Activated naive CD4-positive, alpha-beta T cell treated with anti-CD3 and anti-CD28 coated beads for 36 hours (primary cell): ENCODE measurements at regions of chr19 and their contacts with region 1.

Region 1: DNA sequence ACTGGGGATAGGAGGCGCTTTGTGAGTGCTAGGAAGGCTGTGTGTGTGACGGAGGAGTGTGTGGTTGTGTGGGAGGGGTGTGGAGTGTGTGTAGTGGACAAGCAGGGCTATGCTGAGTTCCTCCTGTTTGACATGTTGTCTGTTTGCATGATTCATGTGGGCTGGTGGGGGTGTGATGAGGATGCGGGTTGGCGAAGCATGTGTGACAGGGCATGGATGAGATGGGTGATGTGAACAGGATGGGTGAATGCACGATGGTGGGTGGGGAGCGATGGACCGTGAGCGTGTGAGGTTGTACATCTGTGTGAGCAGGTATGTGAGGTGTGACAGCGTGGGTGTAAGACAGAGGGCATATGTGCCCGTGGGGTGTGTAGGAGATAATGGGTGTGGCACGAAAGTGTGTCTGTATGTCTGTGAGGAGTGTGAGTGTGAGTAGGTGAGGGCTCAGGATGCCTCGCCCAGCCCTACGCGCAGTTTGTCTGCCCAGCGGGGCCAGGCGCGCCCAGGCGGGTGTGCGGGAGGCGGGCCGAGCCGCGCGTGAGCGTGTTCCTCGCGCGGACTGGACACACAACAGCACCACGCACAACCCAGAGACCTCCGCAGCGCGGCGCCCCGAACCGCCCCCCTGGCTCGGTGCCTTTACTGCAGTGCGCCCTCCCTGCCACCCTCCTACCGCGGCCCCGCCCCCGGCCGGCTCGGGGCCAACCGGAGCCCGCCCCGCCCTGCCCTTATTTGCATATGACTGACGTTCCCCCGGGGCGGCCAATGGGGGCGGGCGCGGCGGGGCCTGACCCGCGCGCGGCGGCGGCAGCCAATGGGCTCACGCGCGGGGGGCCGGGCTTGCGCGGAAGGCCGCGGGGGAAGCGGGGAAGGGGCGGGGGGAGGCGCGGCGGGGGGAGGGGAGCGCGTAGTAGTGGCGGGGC is 14.4 kb downstream of the CIC start:
- DNase-seq: peak; percentile 96
- H3K4me3 Mint-ChIP-seq: peak overlapping the region; percentile 7
- H3K27ac Mint-ChIP-seq: no peak overlapping the region
- H3K4me1 Mint-ChIP-seq: peaks cover 45% of the 10 kb centered on the region
- H3K27me3 Mint-ChIP-seq: no peaks in the 10 kb centered on the region

Region 2: DNA sequence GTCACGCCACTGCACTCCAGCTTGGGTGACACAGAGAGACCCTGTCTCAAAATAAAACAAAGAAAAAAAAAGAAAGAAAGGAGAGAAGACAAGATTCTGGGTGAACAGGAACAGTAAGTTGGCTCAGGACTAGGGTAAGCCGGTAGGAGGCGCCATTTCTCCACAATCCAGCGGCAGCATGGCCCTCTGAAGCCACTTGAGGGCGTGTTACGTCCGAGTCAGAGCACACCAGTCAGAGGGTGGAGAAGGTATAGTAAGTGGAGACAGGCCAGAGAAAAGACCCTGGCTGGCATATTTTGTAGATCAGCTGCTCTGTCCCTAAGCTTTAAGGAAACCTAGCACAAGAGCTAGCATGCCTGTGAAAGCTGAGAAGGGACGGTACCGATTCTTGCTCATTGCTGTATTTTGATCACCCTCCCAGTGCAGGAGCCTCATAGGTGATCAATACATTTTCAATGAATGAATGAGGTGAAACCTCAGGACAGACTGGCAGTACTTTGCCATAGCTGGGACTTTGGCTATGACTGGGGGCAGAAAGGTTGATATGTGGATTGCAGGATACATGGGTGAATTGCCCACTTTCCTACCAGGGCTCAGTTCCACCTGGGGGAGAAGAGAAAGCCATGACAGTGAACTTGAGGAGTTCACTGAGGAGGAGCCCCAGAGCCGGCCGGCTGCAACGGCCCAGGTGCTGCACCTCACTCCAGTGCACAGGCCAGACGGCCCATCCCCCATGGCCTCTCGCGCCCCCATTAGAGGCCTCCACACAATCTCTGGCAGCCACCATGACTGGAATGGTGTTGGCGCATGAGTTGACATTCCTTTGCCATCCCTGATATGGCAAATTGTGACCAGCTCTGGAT is 174.6 kb before region 1 on chr19:
- CTCF ChIA-PET with region 1: interaction called, 3 read pairs
- intact Hi-C with region 1: loop called (anchors 1 kb)
- DNase-seq: peak; percentile 97
- H3K4me3 Mint-ChIP-seq: no peak overlapping the region
- H3K27ac Mint-ChIP-seq: peak overlapping the region; percentile 44
- H3K4me1 Mint-ChIP-seq: peaks cover 55% of the 10 kb centered on the region
- H3K27me3 Mint-ChIP-seq: no peaks in the 10 kb centered on the region

Region 3: DNA sequence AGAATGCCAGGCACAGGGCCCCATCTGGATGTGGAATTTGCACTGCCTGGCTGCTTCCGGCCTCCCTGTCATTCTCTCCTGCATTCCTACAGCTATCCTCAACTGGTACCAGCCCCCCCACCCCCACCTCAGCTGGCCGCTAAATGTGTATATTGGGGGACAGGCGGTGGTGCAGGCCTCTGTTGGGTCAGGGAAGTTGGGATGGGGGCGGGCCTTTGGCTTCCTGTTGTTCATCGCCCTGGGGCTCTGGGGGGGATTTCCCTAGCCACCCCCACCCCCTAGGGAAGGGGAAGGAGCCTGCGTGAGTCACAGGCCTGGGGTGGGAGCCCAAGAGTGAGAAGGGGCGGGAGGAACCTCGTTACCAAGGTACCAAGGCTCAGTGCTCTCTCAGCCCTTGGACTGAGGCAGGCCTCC is 161.7 kb before region 1 on chr19:
- CTCF ChIA-PET with region 1: interaction called, 3 read pairs
- intact Hi-C with region 1: loop called (anchors 2 kb)
- DNase-seq: peak; percentile 97
- H3K4me3 Mint-ChIP-seq: peak overlapping the region; percentile 76
- H3K27ac Mint-ChIP-seq: peak overlapping the region; percentile 98
- H3K4me1 Mint-ChIP-seq: peaks cover 54% of the 10 kb centered on the region
- H3K27me3 Mint-ChIP-seq: no peaks in the 10 kb centered on the region

Region 4: DNA sequence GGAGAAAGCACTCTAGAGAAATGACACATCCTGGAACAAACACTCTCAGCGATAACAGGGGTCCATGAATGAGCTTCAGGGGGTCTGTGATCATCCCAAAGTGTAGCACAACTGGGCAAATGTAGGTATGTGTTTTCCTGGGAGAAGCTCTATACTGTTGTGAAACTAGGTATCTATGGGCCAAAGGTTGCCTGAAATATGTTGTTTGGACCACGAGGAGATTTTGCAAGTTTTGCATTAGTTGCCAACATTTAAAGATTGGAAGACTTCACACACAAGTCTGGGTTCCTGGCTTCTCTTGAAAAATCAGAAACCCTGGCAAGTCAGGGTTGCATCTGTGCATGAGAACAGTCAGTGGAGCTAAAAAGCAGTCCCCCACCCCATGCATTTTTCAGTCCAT is 124.5 kb before region 1 on chr19:
- CTCF ChIA-PET with region 1: no interaction called
- intact Hi-C with region 1: no loop called
- DNase-seq: no peak
- H3K4me3 Mint-ChIP-seq: no peak overlapping the region
- H3K27ac Mint-ChIP-seq: no peak overlapping the region
- H3K4me1 Mint-ChIP-seq: peaks cover 12% of the 10 kb centered on the region
- H3K27me3 Mint-ChIP-seq: no peaks in the 10 kb centered on the region

Region 5: GRCh38 chr19:42199440-42200115 is 83.8 kb before region 1 on chr19:
- CTCF ChIA-PET with region 1: no interaction called
- intact Hi-C with region 1: loop called (anchors 2 kb)
- DNase-seq: peak; percentile 88
- H3K4me3 Mint-ChIP-seq: peak overlapping the region; percentile 58
- H3K27ac Mint-ChIP-seq: peak overlapping the region; percentile 96
- H3K4me1 Mint-ChIP-seq: peaks cover 79% of the 10 kb centered on the region
- H3K27me3 Mint-ChIP-seq: no peaks in the 10 kb centered on the region

Region 6: GRCh38 chr19:42254989-42255765 is 28.2 kb before region 1 on chr19 and contains the start of gene ERF:
- CTCF ChIA-PET with region 1: interaction called, 15 read pairs
- intact Hi-C with region 1: loop called (anchors 1 kb)
- DNase-seq: peak; percentile 93
- H3K4me3 Mint-ChIP-seq: peak within 1 kb of the TSS; percentile 73
- H3K27ac Mint-ChIP-seq: peak within 1 kb of the TSS; percentile 78
- H3K4me1 Mint-ChIP-seq: peaks cover 29% of the 10 kb centered on the region
- H3K27me3 Mint-ChIP-seq: no peaks in the 10 kb centered on the region
- total RNA-seq, gene ERF: 52.4 to 55.6 TPM

Region 7: GRCh38 chr19:42268704-42269477 is 14.5 kb before region 1 on chr19 and contains the start of gene CIC:
- CTCF ChIA-PET with region 1: interaction called, 27 read pairs
- intact Hi-C with region 1: loop called (anchors 1 kb)
- DNase-seq: peak; percentile 100
- H3K4me3 Mint-ChIP-seq: no peak within 1 kb of the TSS
- H3K27ac Mint-ChIP-seq: peak within 1 kb of the TSS; percentile 99
- H3K4me1 Mint-ChIP-seq: peaks cover 30% of the 10 kb centered on the region
- H3K27me3 Mint-ChIP-seq: no peaks in the 10 kb centered on the region
- total RNA-seq, gene CIC: 60.2 to 61.5 TPM

Region 8: DNA sequence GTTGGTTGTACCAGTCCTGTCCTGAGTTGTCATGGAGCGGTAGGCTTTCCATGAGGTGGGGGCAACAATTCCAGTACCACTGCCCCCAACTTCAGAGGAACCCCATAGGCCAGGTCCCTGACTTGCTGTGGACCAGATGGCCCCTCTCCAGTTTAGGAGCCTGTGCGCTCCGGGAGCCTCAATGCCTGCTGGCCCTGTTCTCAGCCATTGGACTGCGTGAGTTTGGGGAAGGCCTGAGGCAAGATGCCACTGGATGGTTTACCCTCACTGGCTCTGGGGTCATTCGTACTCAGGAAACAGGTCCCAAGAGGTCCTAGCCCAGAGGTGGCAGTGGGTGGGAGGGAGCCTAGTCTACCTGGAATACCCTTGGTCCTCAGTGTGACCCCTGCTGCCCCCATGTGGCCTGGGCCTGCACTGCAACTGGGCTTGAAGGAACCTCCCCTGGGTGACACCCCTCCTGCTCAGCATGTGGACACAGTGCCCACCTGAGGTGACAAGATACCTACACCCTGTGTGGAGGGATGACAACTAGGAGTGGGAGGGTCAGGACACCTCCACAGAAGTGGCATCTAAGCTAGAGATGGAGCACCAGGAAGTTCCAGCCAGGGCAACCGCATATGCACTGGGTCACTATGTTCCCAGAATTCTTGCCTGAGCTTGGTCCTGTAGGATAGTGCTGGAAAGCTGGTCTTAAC is 12.6 kb after region 1 on chr19:
- CTCF ChIA-PET with region 1: interaction called, 6 read pairs
- intact Hi-C with region 1: loop called (anchors 2 kb)
- DNase-seq: peak; percentile 95
- H3K4me3 Mint-ChIP-seq: no peak overlapping the region
- H3K27ac Mint-ChIP-seq: no peak overlapping the region
- H3K4me1 Mint-ChIP-seq: peaks cover 4% of the 10 kb centered on the region
- H3K27me3 Mint-ChIP-seq: no peaks in the 10 kb centered on the region

Region 9: GRCh38 chr19:42412227-42412626 is 128.8 kb after region 1 on chr19:
- CTCF ChIA-PET with region 1: no interaction called
- intact Hi-C with region 1: no loop called
- DNase-seq: no peak
- H3K4me3 Mint-ChIP-seq: no peak overlapping the region
- H3K27ac Mint-ChIP-seq: no peak overlapping the region
- H3K4me1 Mint-ChIP-seq: peaks cover 2% of the 10 kb centered on the region
- H3K27me3 Mint-ChIP-seq: no peaks in the 10 kb centered on the region